Activated CD4-positive, alpha-beta memory T cell treated with anti-CD3 and anti-CD28 coated beads, Interleukin-2, amount 10 ng/mL, durations not matched to agents 7 days and 5 days (primary cell): ENCODE measurements at regions of chr10 and their contacts with region 1.

Region 1: DNA sequence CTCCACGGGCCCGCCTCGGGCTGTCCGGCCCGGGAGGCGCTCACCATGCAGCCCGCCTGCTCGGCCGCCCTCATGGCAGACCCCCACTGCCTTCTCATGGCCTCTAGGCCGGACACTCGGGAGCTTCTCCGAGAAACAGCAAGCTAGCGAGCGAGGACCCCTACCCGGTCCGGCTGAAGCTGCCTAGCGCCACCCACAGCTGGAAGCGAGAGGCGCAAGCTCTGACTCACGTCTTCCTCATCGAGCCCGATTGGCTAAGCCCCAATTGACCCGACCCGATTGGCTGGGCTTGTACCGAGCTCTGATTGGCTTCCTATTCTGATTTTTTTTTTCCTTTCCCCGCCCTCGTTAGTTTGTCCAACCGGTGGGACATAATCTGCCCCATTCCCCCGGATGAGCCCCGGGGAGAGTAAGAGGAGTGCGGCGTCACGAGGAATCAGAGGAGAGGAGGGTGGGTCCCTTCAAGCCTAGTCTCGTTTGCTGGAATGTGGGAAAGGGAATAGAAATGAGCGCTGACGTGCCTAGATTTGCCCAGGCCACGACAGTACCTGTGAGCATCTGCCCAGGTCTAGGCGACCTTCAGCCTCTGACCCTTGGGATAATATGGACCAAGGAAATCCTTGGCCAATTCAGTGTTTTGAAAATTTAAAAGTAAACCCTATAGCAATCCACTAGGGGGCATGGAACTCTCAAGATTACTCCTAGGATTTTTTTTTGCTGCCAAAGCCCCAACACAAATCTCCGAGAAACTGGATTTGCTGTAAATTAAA is at the start of gene TYSND1:
- DNase-seq: peak; percentile 94
- H3K4me3 Mint-ChIP-seq: peak within 1 kb of the TSS; percentile 82
- H3K27ac Mint-ChIP-seq: peak within 1 kb of the TSS; percentile 84
- H3K4me1 Mint-ChIP-seq: peaks cover 19% of the 10 kb centered on the region
- H3K27me3 Mint-ChIP-seq: no peaks in the 10 kb centered on the region
- total RNA-seq, gene TYSND1: 9.3 to 9.8 TPM

Region 2: GRCh38 chr10:70115948-70116682 is 30.6 kb before region 1 on chr10:
- CTCF ChIA-PET with region 1: interaction called, 51 read pairs
- POLR2A ChIA-PET with region 1: interaction called, 8 read pairs
- DNase-seq: peak; percentile 56
- H3K4me3 Mint-ChIP-seq: no peak overlapping the region
- H3K27ac Mint-ChIP-seq: no peak overlapping the region
- H3K4me1 Mint-ChIP-seq: peaks cover 3% of the 10 kb centered on the region
- H3K27me3 Mint-ChIP-seq: no peaks in the 10 kb centered on the region

Region 3: GRCh38 chr10:70169649-70170364 is 23.1 kb after region 1 on chr10:
- CTCF ChIA-PET with region 1: interaction called, 77 read pairs
- POLR2A ChIA-PET with region 1: interaction called, 96 read pairs
- DNase-seq: no peak
- H3K4me3 Mint-ChIP-seq: peak overlapping the region; percentile 82
- H3K27ac Mint-ChIP-seq: peak overlapping the region; percentile 86
- H3K4me1 Mint-ChIP-seq: peaks cover 61% of the 10 kb centered on the region
- H3K27me3 Mint-ChIP-seq: no peaks in the 10 kb centered on the region

Region 4: GRCh38 chr10:70198696-70199466 is 52.2 kb after region 1 on chr10:
- CTCF ChIA-PET with region 1: interaction called, 18 read pairs
- POLR2A ChIA-PET with region 1: no interaction called
- DNase-seq: no peak
- H3K4me3 Mint-ChIP-seq: no peak overlapping the region
- H3K27ac Mint-ChIP-seq: no peak overlapping the region
- H3K4me1 Mint-ChIP-seq: peaks cover 38% of the 10 kb centered on the region
- H3K27me3 Mint-ChIP-seq: no peaks in the 10 kb centered on the region

Region 5: GRCh38 chr10:70233109-70233938 is 86.7 kb after region 1 on chr10 and contains the start of gene PPA1:
- CTCF ChIA-PET with region 1: interaction called, 22 read pairs
- POLR2A ChIA-PET with region 1: interaction called, 23 read pairs
- DNase-seq: peak; percentile 99
- H3K4me3 Mint-ChIP-seq: peak within 1 kb of the TSS; percentile 80
- H3K27ac Mint-ChIP-seq: peak within 1 kb of the TSS; percentile 73
- H3K4me1 Mint-ChIP-seq: peaks cover 42% of the 10 kb centered on the region
- H3K27me3 Mint-ChIP-seq: no peaks in the 10 kb centered on the region
- total RNA-seq, gene PPA1: 155 to 158 TPM